Right ventricle myocardium inferior (tissue), 1 donor: ENCODE measurements at regions of chr3 and their contacts with region 1.

Region 1: DNA sequence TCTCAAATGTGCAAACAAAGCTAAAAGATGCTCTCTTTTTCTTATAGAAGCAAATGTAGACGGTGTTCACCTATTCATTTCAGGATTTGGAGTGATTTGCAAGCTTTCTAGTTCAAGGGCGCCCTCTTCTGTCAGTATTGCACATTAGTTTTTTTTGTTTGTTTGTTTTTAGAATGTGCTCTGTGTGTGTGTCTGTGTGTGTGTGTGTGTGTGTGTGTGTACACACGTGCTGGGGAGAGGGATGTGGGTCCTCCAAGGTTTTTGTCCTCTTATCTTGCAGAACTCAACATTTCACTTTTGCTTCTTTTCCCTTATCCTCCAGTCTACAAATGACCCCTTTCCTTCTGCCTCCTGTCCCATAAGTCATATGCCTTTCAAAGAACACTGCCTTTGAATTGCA is 23.5 kb downstream of the DNAH1 start:
- DNase-seq: no peak
- ATAC-seq: peak; percentile 31

Region 2: GRCh38 chr3:52001443-52001974 is 338.1 kb before region 1 on chr3:
- intact Hi-C with region 1: loop called (anchors 5 kb)
- DNase-seq: peak; percentile 90
- ATAC-seq: peak; percentile 66

Region 3: GRCh38 chr3:52108302-52109232 is 231.0 kb before region 1 on chr3:
- intact Hi-C with region 1: no loop called
- DNase-seq: no peak
- ATAC-seq: peak; percentile 69

Region 4: DNA sequence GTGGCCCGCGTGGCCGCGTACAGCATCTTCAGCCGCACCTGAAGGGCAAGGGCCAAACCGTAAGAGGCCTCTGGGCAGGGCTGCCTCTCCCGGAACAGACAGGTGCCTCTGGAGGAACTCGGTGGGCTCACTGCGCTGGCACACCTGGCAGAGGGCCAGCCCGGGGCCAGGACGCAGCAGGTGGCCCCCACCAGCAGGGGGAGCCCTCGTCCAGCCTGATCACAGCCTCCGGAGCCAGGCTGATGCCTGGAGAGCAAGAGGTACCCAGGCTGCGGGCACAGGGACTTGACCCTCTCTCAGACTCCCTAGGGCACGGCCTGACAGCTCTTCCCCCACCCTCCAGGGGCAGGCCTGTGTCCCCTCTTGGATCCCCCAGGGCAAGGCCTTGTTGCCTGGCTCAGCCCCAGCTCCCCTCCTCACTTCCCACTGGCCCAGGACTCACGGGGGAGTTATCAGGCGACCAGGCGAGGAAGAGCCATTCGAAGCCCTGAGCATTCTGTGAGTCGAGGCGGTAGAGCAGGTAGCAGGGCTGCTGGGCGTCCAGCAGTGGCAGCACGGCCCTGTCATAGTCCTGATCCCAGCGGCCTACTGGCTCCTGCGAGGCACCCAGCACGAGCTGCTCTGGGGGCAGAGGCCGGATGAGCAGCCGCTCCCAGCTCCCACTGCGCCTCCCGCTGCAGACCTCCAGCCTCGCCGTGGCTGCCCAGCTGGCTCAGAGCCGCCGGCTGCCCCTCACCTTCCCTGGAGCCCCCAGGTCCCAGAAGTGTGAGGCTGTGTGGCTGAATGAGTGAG is 107.9 kb before region 1 on chr3:
- intact Hi-C with region 1: loop called (anchors 1 kb)
- DNase-seq: peak; percentile 92
- ATAC-seq: peak; percentile 34

Region 5: DNA sequence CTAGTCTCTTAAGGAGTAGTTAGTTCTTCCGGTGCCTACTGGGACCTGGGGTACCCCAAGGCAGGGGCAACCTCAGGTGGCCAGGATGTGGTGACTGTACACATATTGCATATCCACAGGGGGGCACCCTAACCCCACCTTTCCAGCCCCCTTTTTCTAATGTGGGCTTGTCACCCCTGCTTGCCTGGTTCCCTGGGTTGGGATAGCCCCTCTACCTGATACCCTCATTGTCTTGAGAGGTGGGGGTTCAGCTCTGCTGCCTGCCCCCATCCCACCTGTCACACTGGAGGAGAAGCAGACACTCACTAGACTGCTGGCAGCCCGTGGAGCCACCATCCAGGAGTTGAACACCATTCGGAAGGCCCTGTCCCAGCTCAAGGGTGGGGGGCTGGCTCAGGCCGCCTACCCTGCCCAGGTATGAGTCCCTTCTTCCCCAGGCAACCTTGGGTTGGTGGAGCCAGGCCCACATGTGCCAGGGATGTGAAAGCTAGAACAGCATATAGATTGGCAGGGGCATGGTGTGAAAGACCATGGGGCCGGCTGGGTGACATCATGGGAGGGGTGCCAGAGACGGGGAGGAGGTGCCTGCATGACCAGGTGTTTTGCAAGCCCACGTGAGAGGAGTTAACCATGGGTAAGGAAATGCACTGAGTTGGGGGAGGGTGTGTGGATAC is 48.0 kb before region 1 on chr3:
- intact Hi-C with region 1: loop called (anchors 1 kb)
- DNase-seq: no peak
- ATAC-seq: no peak

Region 6: DNA sequence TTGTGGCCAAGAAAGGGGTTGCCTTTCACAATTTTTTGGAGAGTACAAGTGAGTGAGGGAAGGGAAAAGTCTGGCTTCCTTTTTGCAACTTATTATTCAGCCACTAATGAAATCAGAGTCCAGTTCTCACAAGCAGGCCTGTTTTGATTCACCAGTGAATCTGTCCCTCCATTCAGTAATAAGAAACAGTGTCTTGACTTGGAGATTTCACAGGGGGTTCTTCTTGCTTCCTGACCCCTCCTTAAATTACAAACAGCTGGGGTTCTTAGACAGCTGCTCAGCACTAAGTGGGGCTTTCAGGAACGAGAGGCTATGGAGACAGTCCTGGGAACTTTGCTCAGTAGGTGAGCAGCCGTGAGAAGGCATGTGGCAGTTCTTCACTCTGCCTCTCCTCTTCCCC is 80.8 kb after region 1 on chr3:
- intact Hi-C with region 1: no loop called
- DNase-seq: no peak
- ATAC-seq: no peak